ENCODE measurements at regions of chr17 and their contacts with region 1.

Region 1: DNA sequence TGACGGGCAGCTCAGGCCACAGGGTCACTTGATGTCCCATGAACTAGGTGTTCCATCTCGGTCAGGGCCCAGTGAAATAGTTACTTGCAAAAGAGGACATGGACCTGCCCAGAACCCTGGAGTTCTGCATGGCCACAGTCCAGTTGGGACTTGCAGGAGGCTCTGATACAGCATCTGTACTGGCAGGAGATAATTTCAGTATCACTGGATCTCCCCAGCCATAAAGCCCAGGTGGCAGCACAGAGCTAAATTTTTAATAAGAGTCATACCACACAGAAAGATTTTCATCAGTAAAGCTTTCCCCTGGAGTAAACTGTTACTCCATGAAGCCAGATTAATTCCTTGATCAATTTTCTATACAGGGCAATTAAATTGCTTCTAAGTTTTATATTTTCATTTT is 18.0 kb upstream of the SLC16A5 start:
- DNase-seq: no peak
- ATAC-seq: no peak
- H3K4me3 ChIP-seq: no peak overlapping the region
- H3K27ac ChIP-seq: no peak overlapping the region
- H3K4me1 ChIP-seq: peaks cover 0 to 19% (median 6%) of the 10 kb centered on the region in 9 donors
- H3K27me3 ChIP-seq: no peaks in the 10 kb centered on the region
- CTCF ChIP-seq: peak in 7 of 9 donors; percentile 12 to 45 (median 30)

Region 2: DNA sequence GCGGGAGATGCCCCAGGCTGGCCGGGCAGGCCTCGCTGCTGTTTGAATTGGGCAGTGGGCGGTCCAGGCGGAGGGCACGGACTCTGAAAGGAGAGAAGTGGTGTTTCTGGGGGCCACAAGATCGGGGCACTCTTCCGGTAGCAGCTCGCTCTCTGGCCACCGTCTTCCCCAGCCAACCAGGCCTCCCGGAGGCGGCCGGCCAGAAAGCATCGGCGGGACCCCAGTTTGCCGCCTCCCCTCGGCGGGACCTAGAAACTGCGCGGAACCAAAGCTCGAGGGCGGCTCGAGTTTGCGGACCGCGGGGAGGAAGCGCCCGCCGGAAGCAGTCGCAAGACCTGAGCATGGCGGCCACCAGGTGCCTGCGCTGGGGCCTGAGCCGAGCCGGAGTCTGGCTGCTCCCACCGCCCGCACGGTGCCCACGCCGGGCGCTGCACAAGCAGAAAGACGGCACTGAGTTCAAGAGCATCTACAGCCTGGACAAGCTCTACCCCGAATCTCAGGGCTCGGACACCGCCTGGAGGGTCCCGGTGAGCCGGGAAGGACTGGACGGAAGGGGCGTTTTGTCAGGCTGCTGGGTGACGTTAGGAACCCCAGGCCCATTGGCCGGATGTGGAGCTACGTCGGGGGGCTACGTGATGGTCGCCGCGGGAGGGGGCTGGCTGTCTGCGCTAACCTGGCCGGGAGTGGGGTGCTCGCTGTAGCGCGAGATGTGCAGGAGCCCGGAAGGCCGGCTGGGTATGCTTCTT is 57.3 kb before region 1 on chr17 and contains the start of gene MRPL58:
- intact Hi-C with region 1: no loop called
- DNase-seq: peak; percentile 84 to 85
- ATAC-seq: peak; percentile 90 to 94 (median 92)
- H3K4me3 ChIP-seq: peak within 1 kb of the TSS; percentile 73 to 97 (median 90)
- H3K27ac ChIP-seq: peak within 1 kb of the TSS; percentile 87 to 96 (median 92)
- H3K4me1 ChIP-seq: peaks cover 12 to 35% (median 28%) of the 10 kb centered on the region in 9 donors
- H3K27me3 ChIP-seq: no peaks in the 10 kb centered on the region
- CTCF ChIP-seq: peak in 8 of 9 donors; percentile 28 to 72 (median 59)
- total RNA-seq, gene MRPL58: 43.7 to 64.1 (median 51.7) TPM

Region 3: GRCh38 chr17:75051941-75052340 is 17.8 kb before region 1 on chr17:
- intact Hi-C with region 1: loop called in 1 of 10 experiments (anchors 2 kb)
- DNase-seq: no peak
- ATAC-seq: no peak
- H3K4me3 ChIP-seq: no peak overlapping the region
- H3K27ac ChIP-seq: no peak overlapping the region
- H3K4me1 ChIP-seq: peaks cover 6 to 33% (median 18%) of the 10 kb centered on the region in 9 donors
- H3K27me3 ChIP-seq: no peaks in the 10 kb centered on the region
- CTCF ChIP-seq: no peak